GM13977 (cell line): ENCODE measurements at regions of chr12 and their contacts with region 1.

Region 1: DNA sequence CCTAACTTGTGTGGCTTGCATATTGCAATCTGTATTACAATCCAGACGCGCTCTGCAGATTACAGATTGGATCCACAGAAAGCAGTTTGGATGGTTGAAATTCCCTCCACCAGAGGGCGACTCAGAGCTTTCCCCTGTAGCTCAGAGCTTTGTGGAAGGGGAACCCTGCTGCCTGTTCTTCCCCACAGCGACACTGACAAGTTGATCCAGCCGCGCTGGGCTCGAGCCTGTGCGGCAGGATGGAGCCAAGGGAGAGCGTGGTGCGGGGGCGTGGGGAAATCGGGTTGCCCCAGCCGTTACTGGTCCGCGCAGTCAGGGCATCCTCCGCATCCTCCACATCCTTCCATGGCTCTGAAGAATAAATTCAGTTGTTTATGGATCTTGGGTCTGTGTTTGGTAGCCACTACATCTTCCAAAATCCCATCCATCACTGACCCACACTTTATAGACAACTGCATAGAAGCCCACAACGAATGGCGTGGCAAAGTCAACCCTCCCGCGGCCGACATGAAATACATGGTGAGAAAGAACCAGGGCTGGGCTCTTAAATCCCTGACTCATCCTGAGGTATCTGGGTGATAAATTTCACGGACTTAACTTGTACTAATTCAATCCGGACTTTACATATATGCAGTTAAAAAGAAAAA is at the start of gene GLIPR1L1:
- DNase-seq: peak; percentile 67
- CTCF ChIP-seq: peak; percentile 79

Region 2: DNA sequence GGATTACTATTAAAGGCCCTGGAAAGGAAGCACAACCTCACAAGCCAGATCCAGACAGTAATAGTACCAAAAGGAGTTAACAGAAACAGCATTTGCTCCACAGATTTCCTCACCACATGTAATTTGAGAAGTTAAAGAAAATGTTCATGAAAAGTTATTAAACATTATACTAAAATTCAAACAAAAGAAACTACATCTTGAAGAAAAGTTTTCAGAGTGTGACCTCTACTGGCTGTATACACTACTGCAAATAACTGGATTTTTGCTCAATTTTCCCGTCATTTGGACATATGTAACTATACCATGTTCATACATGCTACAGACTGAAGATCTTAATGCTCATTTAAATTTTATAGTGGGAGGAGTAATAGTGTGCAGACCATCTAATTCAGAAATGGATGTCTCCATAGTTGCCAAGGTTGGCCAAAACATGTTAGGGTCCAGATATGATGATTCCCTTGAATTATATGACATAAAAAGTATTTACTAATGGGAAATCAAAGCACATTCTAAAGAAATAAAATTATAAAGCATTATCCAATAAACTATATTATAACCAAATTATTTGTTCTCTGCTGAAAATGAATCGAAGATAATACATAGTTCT is 171.3 kb after region 1 on chr12:
- in situ Hi-C with region 1: loop called (anchors 10 kb)
- DNase-seq: no peak
- CTCF ChIP-seq: peak; percentile 54

Region 3: GRCh38 chr12:76031537-76032073 is 697.1 kb after region 1 on chr12 and contains the start of gene PHLDA1:
- in situ Hi-C with region 1: loop called (anchors 25 kb)
- DNase-seq: peak; percentile 95
- CTCF ChIP-seq: peak; percentile 74